AG04450 (cell line): ENCODE measurements at regions of chr12 and their contacts with region 1.

Region 1: DNA sequence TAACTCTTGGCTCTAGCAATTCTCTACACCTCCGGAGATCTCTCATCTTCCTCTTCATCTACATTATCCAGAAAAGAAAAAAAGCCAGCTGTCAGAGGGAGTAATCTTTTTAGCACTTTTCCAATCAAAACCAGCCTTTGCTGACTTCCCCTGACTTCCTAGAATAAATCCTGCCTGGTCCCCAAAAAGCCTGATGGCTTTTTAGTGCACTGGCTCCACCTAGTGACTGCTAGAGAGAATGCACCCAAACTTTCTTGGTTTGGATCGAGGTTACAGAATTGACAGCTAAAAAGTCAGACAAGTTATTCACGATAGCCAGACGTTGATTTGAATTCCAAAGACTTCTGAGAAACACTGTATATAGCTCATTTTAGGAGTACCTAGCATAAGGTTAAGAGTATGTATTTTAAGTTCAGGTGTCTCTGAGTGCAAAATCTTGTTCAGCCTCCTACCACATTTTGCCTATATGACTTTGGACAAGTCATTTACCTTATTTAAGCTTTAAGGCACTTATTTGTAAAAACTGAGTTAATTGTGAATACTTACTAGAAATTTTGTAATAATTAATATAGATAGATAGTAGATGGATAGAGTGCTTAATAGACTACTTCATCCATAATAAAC is 185.7 kb upstream of the GRIN2B start:
- DNase-seq: peak; percentile 24
- H3K4me3 ChIP-seq: no peak overlapping the region
- H3K27ac ChIP-seq: no peak overlapping the region
- H3K27me3 ChIP-seq: no peaks in the 10 kb centered on the region
- CTCF ChIP-seq: peak; percentile 98

Region 2: GRCh38 chr12:13740150-13740547 is 427.0 kb before region 1 on chr12:
- CTCF ChIA-PET with region 1: interaction called, 30 read pairs
- POLR2A ChIA-PET with region 1: no interaction called
- DNase-seq: no peak
- H3K4me3 ChIP-seq: no peak overlapping the region
- H3K27ac ChIP-seq: no peak overlapping the region
- H3K27me3 ChIP-seq: no peaks in the 10 kb centered on the region
- CTCF ChIP-seq: no peak

Region 3: GRCh38 chr12:13835652-13836051 is 331.5 kb before region 1 on chr12:
- CTCF ChIA-PET with region 1: no interaction called
- POLR2A ChIA-PET with region 1: no interaction called
- DNase-seq: no peak
- H3K4me3 ChIP-seq: no peak overlapping the region
- H3K27ac ChIP-seq: no peak overlapping the region
- H3K27me3 ChIP-seq: no peaks in the 10 kb centered on the region
- CTCF ChIP-seq: no peak

Region 4: GRCh38 chr12:13864081-13864673 is 302.9 kb before region 1 on chr12:
- CTCF ChIA-PET with region 1: interaction called, 53 read pairs
- POLR2A ChIA-PET with region 1: no interaction called
- DNase-seq: peak; percentile 20
- H3K4me3 ChIP-seq: no peak overlapping the region
- H3K27ac ChIP-seq: no peak overlapping the region
- H3K27me3 ChIP-seq: no peaks in the 10 kb centered on the region
- CTCF ChIP-seq: peak; percentile 92